Ovary (tissue), 10 donors: ENCODE measurements at regions of chr18 and their contacts with region 1.

Region 1: DNA sequence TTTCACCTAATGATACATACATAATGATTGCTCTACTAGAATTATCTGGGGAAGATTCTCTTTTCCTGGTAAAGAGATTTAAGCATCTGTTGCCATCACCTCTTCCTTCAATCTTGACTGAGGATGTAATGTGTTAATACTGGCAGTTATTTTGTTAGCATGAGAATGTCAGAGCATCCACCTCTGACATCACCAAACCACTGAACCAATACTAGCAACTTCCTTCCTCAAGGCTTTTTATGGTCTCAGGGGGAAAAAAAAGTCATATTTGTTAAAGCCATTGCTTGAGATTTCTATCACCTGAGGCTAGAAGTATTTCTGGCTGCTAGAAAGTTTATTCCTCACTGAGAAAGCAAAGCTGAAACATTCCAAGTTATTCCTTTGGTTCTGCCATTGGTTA is 48.5 kb downstream of the DSEL start:
- DNase-seq: no peak
- H3K4me3 ChIP-seq: no peak overlapping the region
- H3K27ac ChIP-seq: no peak overlapping the region
- H3K4me1 ChIP-seq: no peaks in the 10 kb centered on the region
- H3K27me3 ChIP-seq: no peaks in the 10 kb centered on the region
- CTCF ChIP-seq: no peak
- EP300 ChIP-seq: no peak
- POLR2A ChIP-seq: no peak

Region 2: GRCh38 chr18:67250776-67251424 is 217.1 kb before region 1 on chr18:
- intact Hi-C with region 1: no loop called
- DNase-seq: no peak
- H3K4me3 ChIP-seq: no peak overlapping the region
- H3K27ac ChIP-seq: no peak overlapping the region
- H3K4me1 ChIP-seq: no peaks in the 10 kb centered on the region
- H3K27me3 ChIP-seq: no peaks in the 10 kb centered on the region
- CTCF ChIP-seq: no peak
- EP300 ChIP-seq: no peak
- POLR2A ChIP-seq: no peak

Region 3: GRCh38 chr18:68406761-68407160 is 938.7 kb after region 1 on chr18:
- intact Hi-C with region 1: loop called in 1 of 4 experiments (anchors 5 kb)
- DNase-seq: no peak
- H3K4me3 ChIP-seq: no peak overlapping the region
- H3K27ac ChIP-seq: no peak overlapping the region
- H3K4me1 ChIP-seq: no peaks in the 10 kb centered on the region
- H3K27me3 ChIP-seq: no peaks in the 10 kb centered on the region
- CTCF ChIP-seq: no peak
- EP300 ChIP-seq: no peak
- POLR2A ChIP-seq: no peak